ENCODE measurements at regions of chr17 and their contacts with region 1.

Region 1: DNA sequence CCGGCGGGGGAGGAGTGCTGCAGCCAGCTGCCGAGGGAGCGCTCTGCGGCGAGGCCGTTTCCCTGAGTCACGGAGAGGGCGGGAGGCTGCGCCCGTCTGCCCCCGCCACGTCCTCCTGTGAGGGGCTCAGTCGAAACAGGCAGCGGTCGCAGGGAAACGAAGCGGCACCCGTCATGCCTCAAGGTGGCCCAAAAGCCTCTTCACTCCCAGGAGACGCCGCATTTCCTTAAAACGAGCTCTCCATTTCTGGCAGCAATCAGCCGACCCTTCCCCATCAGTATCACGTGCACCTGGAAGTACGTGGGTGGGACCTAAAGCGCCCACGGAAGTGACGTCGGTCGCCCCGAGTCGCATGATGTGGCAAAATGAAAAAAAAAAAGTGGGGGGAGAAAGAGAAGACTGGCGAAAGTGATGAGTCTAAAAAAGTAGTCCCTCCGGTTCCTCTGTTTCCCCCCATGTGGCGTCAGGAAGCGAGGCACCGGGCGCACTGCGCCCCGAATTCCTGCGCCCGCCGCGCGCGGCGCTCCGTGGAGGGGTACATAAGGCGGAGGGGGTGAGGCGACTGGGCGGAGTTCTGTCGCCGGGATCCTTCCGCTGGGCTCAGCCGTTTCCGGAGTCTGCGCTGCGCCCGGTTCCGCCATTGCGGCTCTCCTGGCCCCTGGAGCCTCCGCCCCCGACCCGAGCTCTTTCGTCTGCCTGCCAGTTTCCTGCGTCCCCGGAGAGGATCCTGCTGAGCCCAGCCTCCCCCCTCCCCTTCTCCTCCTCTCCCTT is at the start of gene CLTC:
- DNase-seq: peak; percentile 93
- H3K4me3 ChIP-seq: peak within 1 kb of the TSS; percentile 89 to 95 (median 92)
- H3K27ac ChIP-seq: peak within 1 kb of the TSS; percentile 98 to 99 (median 98)
- H3K4me1 ChIP-seq: peaks cover 36 to 38% of the 10 kb centered on the region in 2 donors
- H3K27me3 ChIP-seq: no peaks in the 10 kb centered on the region
- CTCF ChIP-seq: no peak
- POLR2A ChIP-seq: peak; percentile 91 to 99
- total RNA-seq, gene CLTC: 250 to 474 (median 364) TPM

Region 2: DNA sequence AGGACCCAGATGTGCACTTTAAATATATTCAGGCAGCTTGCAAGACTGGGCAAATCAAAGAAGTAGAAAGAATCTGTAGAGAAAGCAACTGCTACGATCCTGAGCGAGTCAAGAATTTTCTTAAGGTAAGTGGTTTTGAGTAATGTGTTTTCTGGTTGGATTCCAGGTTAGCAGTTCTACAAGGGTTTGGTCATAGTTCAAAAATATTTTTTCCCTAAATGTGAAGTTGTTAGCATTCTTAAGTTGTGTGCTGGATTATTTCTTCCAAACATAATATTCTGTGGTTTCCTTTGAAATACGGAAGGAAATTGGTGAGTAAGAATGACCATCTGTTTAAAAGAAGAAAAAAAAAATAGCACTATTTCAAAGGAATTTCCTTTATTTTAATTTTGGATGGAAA is 49.3 kb after region 1 on chr17:
- intact Hi-C with region 1: loop called (anchors 10 kb)
- DNase-seq: no peak
- H3K4me3 ChIP-seq: no peak overlapping the region
- H3K27ac ChIP-seq: peak overlapping the region; percentile 61 to 82 (median 79)
- H3K4me1 ChIP-seq: peaks cover 45 to 68% of the 10 kb centered on the region in 2 donors
- H3K27me3 ChIP-seq: no peaks in the 10 kb centered on the region
- CTCF ChIP-seq: no peak
- POLR2A ChIP-seq: no peak

Region 3: DNA sequence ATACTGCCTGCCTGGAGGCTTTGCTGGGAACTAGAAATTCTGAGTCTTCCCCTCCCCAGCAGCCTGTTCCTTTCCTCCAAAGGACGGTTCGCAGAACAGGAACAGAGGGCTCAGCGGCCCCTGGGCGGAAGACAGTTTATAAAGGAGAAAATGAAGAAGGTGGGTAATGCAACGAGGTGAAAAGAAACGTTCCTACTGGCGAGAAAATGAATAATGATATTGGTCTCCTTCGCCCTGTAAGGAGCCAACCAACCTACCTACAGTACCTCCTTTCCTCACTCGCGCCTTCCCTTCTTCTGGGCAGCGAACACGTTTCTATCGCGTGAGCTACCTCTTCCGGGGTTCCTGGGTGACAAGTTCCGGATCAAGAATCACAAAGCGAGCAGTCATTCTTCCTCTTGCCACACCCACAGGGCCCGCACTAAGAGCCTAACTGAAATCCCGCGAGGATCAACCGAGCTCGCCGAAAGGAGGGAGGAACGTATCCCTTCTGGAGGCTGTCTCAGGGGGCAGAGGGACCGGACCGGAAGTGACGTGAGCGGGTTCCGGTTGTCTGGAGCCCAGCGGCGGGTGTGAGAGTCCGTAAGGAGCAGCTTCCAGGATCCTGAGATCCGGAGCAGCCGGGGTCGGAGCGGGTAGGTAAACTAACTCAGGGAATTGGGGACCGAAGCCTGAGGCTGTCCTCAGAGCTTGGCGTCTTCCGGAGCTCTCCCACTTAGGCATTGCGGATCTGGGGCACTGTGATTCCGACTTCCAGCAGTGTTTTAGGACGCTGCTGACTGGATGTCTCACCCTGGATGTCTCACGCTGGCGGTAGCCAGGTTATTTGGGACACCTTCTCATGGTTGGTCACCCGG is 87.9 kb after region 1 on chr17 and contains the starts of genes PTRH2 and VMP1:
- intact Hi-C with region 1: loop called (anchors 10 kb)
- DNase-seq: peak; percentile 99
- H3K4me3 ChIP-seq: peak within 1 kb of the TSS; percentile 30 to 60 (median 51)
- H3K27ac ChIP-seq: peak within 1 kb of the TSS; percentile 58 to 92 (median 80)
- H3K4me1 ChIP-seq: peaks cover 20 to 29% of the 10 kb centered on the region in 2 donors
- H3K27me3 ChIP-seq: no peaks in the 10 kb centered on the region
- CTCF ChIP-seq: no peak
- POLR2A ChIP-seq: peak; percentile 11 to 85
- total RNA-seq, gene PTRH2: 9.6 to 27.4 (median 21.7) TPM
- total RNA-seq, gene VMP1: 98.5 to 168 (median 125) TPM

Measured in thyroid gland (tissue), 4 donors.